GM12878 (cell line): ENCODE measurements at regions of chr17 and their contacts with region 1.

Region 1: GRCh38 chr17:18960803-18961511 is 9.0 kb downstream of the SLC5A10 start:
- DNase-seq: peak; percentile 44
- ATAC-seq: peak; percentile 96
- H3K4me3 ChIP-seq: no peak overlapping the region
- H3K27ac ChIP-seq: peak overlapping the region; percentile 25
- H3K4me1 ChIP-seq: peaks cover 10% of the 10 kb centered on the region
- H3K27me3 ChIP-seq: no peaks in the 10 kb centered on the region
- CTCF ChIP-seq: peak; percentile 93 to 95 (median 95); a peak in 5 of 6 replicates
- EP300 ChIP-seq: no peak
- POLR2A ChIP-seq: no peak
- RAD21 ChIP-seq: peak; percentile 85

Region 2: GRCh38 chr17:18626152-18626870 is 334.6 kb before region 1 on chr17:
- CTCF ChIA-PET with region 1: interaction called, 14 read pairs
- POLR2A ChIA-PET with region 1: no interaction called
- RAD21 ChIA-PET with region 1: interaction called, 6 read pairs
- SMC1A ChIA-PET with region 1: interaction called, 4 read pairs
- in situ Hi-C with region 1: no loop called
- intact Hi-C with region 1: no loop called
- DNase-seq: no peak
- ATAC-seq: no peak
- H3K4me3 ChIP-seq: peak overlapping the region; percentile 54; the same call in 1 of the 2 replicates
- H3K27ac ChIP-seq: no peak overlapping the region
- H3K4me1 ChIP-seq: peaks cover 5% of the 10 kb centered on the region; the same call in 1 of the 2 replicates
- H3K27me3 ChIP-seq: no peaks in the 10 kb centered on the region
- CTCF ChIP-seq: no peak
- EP300 ChIP-seq: no peak
- POLR2A ChIP-seq: no peak
- RAD21 ChIP-seq: no peak

Region 3: DNA sequence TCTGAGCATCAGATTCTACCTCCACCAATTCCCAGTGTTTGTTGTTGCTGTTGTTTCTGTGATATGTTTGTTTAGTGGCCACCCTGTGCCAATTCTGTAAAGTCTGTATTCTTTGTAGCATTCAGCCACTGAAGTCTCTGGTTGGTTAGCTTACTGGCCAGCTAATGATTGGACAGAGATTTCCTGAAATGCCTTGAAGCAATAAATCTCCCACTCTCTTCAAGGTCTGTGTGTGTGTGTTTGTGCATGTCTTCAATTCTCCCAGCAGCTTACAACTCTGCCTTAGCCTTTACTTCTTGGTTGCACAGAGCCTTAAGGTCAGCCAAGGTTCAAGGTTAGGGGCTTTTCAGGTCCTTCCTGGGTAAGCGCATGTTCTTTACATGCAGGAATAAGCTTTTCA is 64.8 kb before region 1 on chr17:
- CTCF ChIA-PET with region 1: interaction called, 12 read pairs
- POLR2A ChIA-PET with region 1: interaction called, 4 read pairs
- RAD21 ChIA-PET with region 1: interaction called, 6 read pairs
- SMC1A ChIA-PET with region 1: interaction called, 4 read pairs
- in situ Hi-C with region 1: no loop called
- intact Hi-C with region 1: no loop called
- DNase-seq: no peak
- ATAC-seq: no peak
- H3K4me3 ChIP-seq: no peak overlapping the region
- H3K27ac ChIP-seq: no peak overlapping the region
- H3K4me1 ChIP-seq: peaks cover 23% of the 10 kb centered on the region
- H3K27me3 ChIP-seq: no peaks in the 10 kb centered on the region
- CTCF ChIP-seq: no peak
- EP300 ChIP-seq: no peak
- POLR2A ChIP-seq: no peak
- RAD21 ChIP-seq: no peak

Region 4: GRCh38 chr17:18921912-18922451 is 39.0 kb before region 1 on chr17:
- CTCF ChIA-PET with region 1: interaction called, 13 read pairs
- POLR2A ChIA-PET with region 1: interaction called, 3 read pairs
- RAD21 ChIA-PET with region 1: interaction called, 4 read pairs
- SMC1A ChIA-PET with region 1: interaction called, 6 read pairs
- in situ Hi-C with region 1: no loop called
- intact Hi-C with region 1: no loop called
- DNase-seq: peak; percentile 90
- ATAC-seq: peak; percentile 79
- H3K4me3 ChIP-seq: 0 out of 2 replicates have a peak overlapping the region, but pooled peaks have one; percentile 37
- H3K27ac ChIP-seq: peak overlapping the region; percentile 98
- H3K4me1 ChIP-seq: peaks cover 28% of the 10 kb centered on the region
- H3K27me3 ChIP-seq: no peaks in the 10 kb centered on the region
- CTCF ChIP-seq: no peak
- EP300 ChIP-seq: peak; percentile 84 to 92
- POLR2A ChIP-seq: no peak
- RAD21 ChIP-seq: 0 out of 2 replicates have a peak, but pooled peaks have one; percentile 5

Region 5: GRCh38 chr17:19004421-19005136 is 43.6 kb after region 1 on chr17 and contains the start of gene FAM83G:
- CTCF ChIA-PET with region 1: interaction called, 4 read pairs
- POLR2A ChIA-PET with region 1: no interaction called
- RAD21 ChIA-PET with region 1: interaction called, 13 read pairs
- SMC1A ChIA-PET with region 1: interaction called, 3 read pairs
- in situ Hi-C with region 1: no loop called
- intact Hi-C with region 1: no loop called
- DNase-seq: peak; percentile 19
- ATAC-seq: peak; percentile 84
- H3K4me3 ChIP-seq: peak within 1 kb of the TSS; percentile 88
- H3K27ac ChIP-seq: peak within 1 kb of the TSS; percentile 49
- H3K4me1 ChIP-seq: peaks cover 25% of the 10 kb centered on the region
- H3K27me3 ChIP-seq: no peaks in the 10 kb centered on the region
- CTCF ChIP-seq: no peak
- EP300 ChIP-seq: no peak
- POLR2A ChIP-seq: peak; percentile 65
- RAD21 ChIP-seq: no peak
- polyA plus RNA-seq, gene FAM83G: 0.03 to 0.07 TPM

Region 6: GRCh38 chr17:19295473-19296135 is 334.6 kb after region 1 on chr17:
- CTCF ChIA-PET with region 1: no interaction called
- POLR2A ChIA-PET with region 1: no interaction called
- RAD21 ChIA-PET with region 1: no interaction called
- SMC1A ChIA-PET with region 1: no interaction called
- in situ Hi-C with region 1: no loop called
- intact Hi-C with region 1: no loop called
- DNase-seq: no peak
- ATAC-seq: no peak
- H3K4me3 ChIP-seq: no peak overlapping the region
- H3K27ac ChIP-seq: no peak overlapping the region
- H3K4me1 ChIP-seq: no peaks in the 10 kb centered on the region; the same call in 1 of the 2 replicates
- H3K27me3 ChIP-seq: no peaks in the 10 kb centered on the region; a peak in 1 of 4 replicates
- CTCF ChIP-seq: no peak
- EP300 ChIP-seq: no peak
- POLR2A ChIP-seq: no peak
- RAD21 ChIP-seq: no peak